K562 (cell line): ENCODE measurements at regions of chr16 and their contacts with region 1.

Region 1: GRCh38 chr16:714558-715476 is at the start of gene METRN:
- DNase-seq: peak; percentile 87 to 95 (median 91)
- ATAC-seq: peak; percentile 84
- H3K4me3 ChIP-seq: peak within 1 kb of the TSS; percentile 68
- H3K27ac ChIP-seq: peak within 1 kb of the TSS; percentile 35; the same call in 2 of the 3 replicates
- H3K4me1 ChIP-seq: peaks cover 12 to 85% of the 10 kb centered on the region in 2 experiments; a peak in 4 of 5 replicates
- H3K27me3 ChIP-seq: no peaks in the 10 kb centered on the region
- CTCF ChIP-seq: no peak
- EP300 ChIP-seq: no peak
- POLR2A ChIP-seq: no peak
- RAD21 ChIP-seq: no peak
- polyA plus RNA-seq, gene METRN: 0.20 to 1.2 TPM

Region 2: GRCh38 chr16:200388-200787 is 514.4 kb before region 1 on chr16:
- CTCF ChIA-PET with region 1: no interaction called
- POLR2A ChIA-PET with region 1: no interaction called
- in situ Hi-C with region 1: no loop called
- intact Hi-C with region 1: no loop called
- DNase-seq: no peak
- ATAC-seq: no peak
- H3K4me3 ChIP-seq: no peak overlapping the region
- H3K27ac ChIP-seq: no peak overlapping the region
- H3K4me1 ChIP-seq: no peaks in the 10 kb centered on the region
- H3K27me3 ChIP-seq: no peaks in the 10 kb centered on the region
- CTCF ChIP-seq: no peak
- EP300 ChIP-seq: no peak
- POLR2A ChIP-seq: no peak
- RAD21 ChIP-seq: no peak

Region 3: GRCh38 chr16:234468-235305 is 480.1 kb before region 1 on chr16 and contains the start of gene FAM234A:
- CTCF ChIA-PET with region 1: no interaction called
- POLR2A ChIA-PET with region 1: no interaction called
- in situ Hi-C with region 1: no loop called
- intact Hi-C with region 1: no loop called
- DNase-seq: peak; percentile 93 to 97 (median 95)
- ATAC-seq: peak; percentile 90
- H3K4me3 ChIP-seq: peak within 1 kb of the TSS; percentile 87
- H3K27ac ChIP-seq: peak within 1 kb of the TSS; percentile 92
- H3K4me1 ChIP-seq: peaks cover 7 to 29% of the 10 kb centered on the region in 2 experiments
- H3K27me3 ChIP-seq: no peaks in the 10 kb centered on the region
- CTCF ChIP-seq: peak; percentile 50 to 68 (median 59); a peak in 5 of 6 replicates
- EP300 ChIP-seq: no peak
- POLR2A ChIP-seq: peak; percentile 84
- RAD21 ChIP-seq: peak; percentile 2 to 28; a peak in 3 of 4 replicates
- polyA plus RNA-seq, gene FAM234A: 1.0 to 1.6 TPM

Region 4: DNA sequence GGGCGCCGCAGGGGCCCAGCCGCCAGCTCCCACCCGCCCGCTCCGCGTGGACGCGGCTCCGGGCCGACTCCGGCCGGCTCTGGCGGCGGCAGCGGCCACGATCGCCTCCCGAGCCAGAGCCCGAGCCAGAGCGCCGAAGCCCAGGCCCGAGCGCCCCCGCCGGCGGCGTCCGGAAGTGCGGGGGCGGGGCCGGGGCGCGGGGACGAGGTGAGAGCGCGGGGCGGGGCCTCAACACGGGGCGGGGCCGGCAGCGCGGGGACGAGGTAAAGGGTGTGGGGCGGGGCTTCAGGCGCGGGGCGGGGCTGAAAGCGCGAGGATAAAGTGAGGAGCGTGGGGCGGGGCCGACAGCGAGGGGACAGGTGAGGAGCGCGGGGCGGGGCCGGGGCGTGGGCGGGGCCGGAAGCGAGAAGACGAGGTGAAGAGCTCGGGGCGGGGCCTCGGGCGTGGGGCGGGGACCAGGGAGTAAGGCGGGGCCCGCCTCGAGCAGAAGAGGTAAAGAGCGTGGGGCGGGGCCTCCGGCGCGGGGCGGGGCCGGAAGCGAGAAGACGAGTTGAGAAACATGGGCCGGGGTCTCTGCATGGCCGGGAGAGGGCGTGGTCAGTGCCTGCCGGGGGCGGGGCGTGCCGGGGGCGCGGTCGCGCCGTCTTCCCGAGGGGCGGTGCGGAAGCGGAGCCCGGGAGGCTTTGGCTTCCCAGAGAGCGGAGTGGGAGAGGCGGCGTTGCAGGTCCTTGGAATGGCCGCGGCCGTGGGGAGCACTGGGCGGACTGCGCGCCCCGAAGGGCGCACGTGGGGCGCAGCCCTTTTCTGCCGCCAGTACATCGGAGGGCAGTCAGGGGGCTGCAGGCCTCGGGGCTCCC is 362.0 kb before region 1 on chr16 and contains the start of gene AXIN1:
- CTCF ChIA-PET with region 1: no interaction called
- POLR2A ChIA-PET with region 1: no interaction called
- in situ Hi-C with region 1: no loop called
- intact Hi-C with region 1: no loop called
- DNase-seq: peak; percentile 90 to 99 (median 94)
- ATAC-seq: peak; percentile 89
- H3K4me3 ChIP-seq: peak within 1 kb of the TSS; percentile 78
- H3K27ac ChIP-seq: peak within 1 kb of the TSS; percentile 81
- H3K4me1 ChIP-seq: peaks cover 26 to 35% of the 10 kb centered on the region in 2 experiments
- H3K27me3 ChIP-seq: no peaks in the 10 kb centered on the region
- CTCF ChIP-seq: peak in 2 of 3 experiments; percentile 62 to 81; a peak in 3 of 6 replicates
- EP300 ChIP-seq: no peak
- POLR2A ChIP-seq: peak; percentile 66
- RAD21 ChIP-seq: peak in 1 of 2 experiments; percentile 54; a peak in 3 of 4 replicates
- polyA plus RNA-seq, gene AXIN1: 0.42 to 0.77 TPM

Region 5: GRCh38 chr16:684067-684794 is 30.6 kb before region 1 on chr16 and contains the start of gene JMJD8:
- CTCF ChIA-PET with region 1: no interaction called
- POLR2A ChIA-PET with region 1: no interaction called
- in situ Hi-C with region 1: no loop called
- intact Hi-C with region 1: no loop called
- DNase-seq: peak; percentile 83 to 97 (median 90)
- ATAC-seq: peak; percentile 76
- H3K4me3 ChIP-seq: peak within 1 kb of the TSS; percentile 98
- H3K27ac ChIP-seq: peak within 1 kb of the TSS; percentile 88
- H3K4me1 ChIP-seq: peaks cover 27 to 96% of the 10 kb centered on the region in 2 experiments
- H3K27me3 ChIP-seq: no peaks in the 10 kb centered on the region
- CTCF ChIP-seq: 0 out of 6 replicates have a peak, but pooled peaks of 1 of the 3 experiments have one; percentile 1
- EP300 ChIP-seq: no peak; the same call in 1 of the 2 replicates
- POLR2A ChIP-seq: peak; percentile 59; the same call in 1 of the 2 replicates
- RAD21 ChIP-seq: no peak
- polyA plus RNA-seq, gene JMJD8: 1.2 to 2.3 TPM

Region 6: GRCh38 chr16:728131-728889 is 13.5 kb after region 1 on chr16:
- CTCF ChIA-PET with region 1: no interaction called
- POLR2A ChIA-PET with region 1: interaction called, 16 read pairs
- in situ Hi-C with region 1: no loop called
- intact Hi-C with region 1: loop called (anchors 2 kb)
- DNase-seq: peak; percentile 82 to 95 (median 86)
- ATAC-seq: peak; percentile 73
- H3K4me3 ChIP-seq: peak overlapping the region; percentile 80
- H3K27ac ChIP-seq: peak overlapping the region; percentile 98
- H3K4me1 ChIP-seq: peaks cover 10 to 93% of the 10 kb centered on the region in 2 experiments; a peak in 4 of 5 replicates
- H3K27me3 ChIP-seq: no peaks in the 10 kb centered on the region
- CTCF ChIP-seq: no peak
- EP300 ChIP-seq: no peak
- POLR2A ChIP-seq: peak; percentile 69
- RAD21 ChIP-seq: no peak

Region 7: GRCh38 chr16:788394-789126 is 73.7 kb after region 1 on chr16 and contains the start of gene CHTF18:
- CTCF ChIA-PET with region 1: interaction called, 73 read pairs
- POLR2A ChIA-PET with region 1: interaction called, 5 read pairs
- in situ Hi-C with region 1: loop called (anchors 5 kb)
- intact Hi-C with region 1: loop called (anchors 1 kb)
- DNase-seq: peak; percentile 95 to 100 (median 98)
- ATAC-seq: peak; percentile 86
- H3K4me3 ChIP-seq: peak within 1 kb of the TSS; percentile 96
- H3K27ac ChIP-seq: peak within 1 kb of the TSS; percentile 83
- H3K4me1 ChIP-seq: peaks cover 13 to 94% of the 10 kb centered on the region in 2 experiments; a peak in 4 of 5 replicates
- H3K27me3 ChIP-seq: no peaks in the 10 kb centered on the region
- CTCF ChIP-seq: no peak
- EP300 ChIP-seq: no peak
- POLR2A ChIP-seq: peak; percentile 67; the same call in 1 of the 2 replicates
- RAD21 ChIP-seq: no peak
- polyA plus RNA-seq, gene CHTF18: 2.5 to 2.7 TPM

Region 8: GRCh38 chr16:807347-808084 is 92.7 kb after region 1 on chr16:
- CTCF ChIA-PET with region 1: no interaction called
- POLR2A ChIA-PET with region 1: interaction called, 5 read pairs
- in situ Hi-C with region 1: no loop called
- intact Hi-C with region 1: loop called (anchors 5 kb)
- DNase-seq: peak; percentile 94 to 98 (median 96)
- ATAC-seq: peak; percentile 98
- H3K4me3 ChIP-seq: peak overlapping the region; percentile 98
- H3K27ac ChIP-seq: peak overlapping the region; percentile 95
- H3K4me1 ChIP-seq: peaks cover 4 to 65% of the 10 kb centered on the region in 2 experiments; a peak in 4 of 5 replicates
- H3K27me3 ChIP-seq: peaks cover 7 to 19% of the 10 kb centered on the region in 2 experiments; a peak in 4 of 5 replicates
- CTCF ChIP-seq: no peak
- EP300 ChIP-seq: no peak
- POLR2A ChIP-seq: peak; percentile 88
- RAD21 ChIP-seq: no peak

Region 9: GRCh38 chr16:1054660-1055556 is 340.1 kb after region 1 on chr16:
- CTCF ChIA-PET with region 1: interaction called, 12 read pairs
- POLR2A ChIA-PET with region 1: no interaction called
- in situ Hi-C with region 1: loop called (anchors 10 kb)
- intact Hi-C with region 1: no loop called
- DNase-seq: peak; percentile 64 to 75 (median 67)
- ATAC-seq: peak; percentile 93
- H3K4me3 ChIP-seq: no peak overlapping the region
- H3K27ac ChIP-seq: no peak overlapping the region
- H3K4me1 ChIP-seq: peaks cover 0 to 35% of the 10 kb centered on the region in 2 experiments; a peak in 2 of 5 replicates
- H3K27me3 ChIP-seq: peaks cover 11 to 24% of the 10 kb centered on the region in 2 experiments; a peak in 3 of 5 replicates
- CTCF ChIP-seq: peak; percentile 74 to 81 (median 77)
- EP300 ChIP-seq: no peak
- POLR2A ChIP-seq: no peak
- RAD21 ChIP-seq: peak; percentile 52 to 79

Region 10: GRCh38 chr16:1105888-1106620 is 391.2 kb after region 1 on chr16:
- CTCF ChIA-PET with region 1: interaction called, 17 read pairs
- POLR2A ChIA-PET with region 1: no interaction called
- in situ Hi-C with region 1: no loop called
- intact Hi-C with region 1: no loop called
- DNase-seq: peak; percentile 59 to 83 (median 81)
- ATAC-seq: peak; percentile 78
- H3K4me3 ChIP-seq: no peak overlapping the region
- H3K27ac ChIP-seq: no peak overlapping the region
- H3K4me1 ChIP-seq: peaks cover 0 to 68% of the 10 kb centered on the region in 2 experiments; a peak in 2 of 5 replicates
- H3K27me3 ChIP-seq: peaks cover 25 to 63% of the 10 kb centered on the region in 2 experiments
- CTCF ChIP-seq: peak; percentile 58 to 82 (median 81)
- EP300 ChIP-seq: no peak
- POLR2A ChIP-seq: no peak
- RAD21 ChIP-seq: peak; percentile 58 to 80